Heart right ventricle (tissue), 16 donors: ENCODE measurements at regions of chrX and their contacts with region 1.

Region 1: DNA sequence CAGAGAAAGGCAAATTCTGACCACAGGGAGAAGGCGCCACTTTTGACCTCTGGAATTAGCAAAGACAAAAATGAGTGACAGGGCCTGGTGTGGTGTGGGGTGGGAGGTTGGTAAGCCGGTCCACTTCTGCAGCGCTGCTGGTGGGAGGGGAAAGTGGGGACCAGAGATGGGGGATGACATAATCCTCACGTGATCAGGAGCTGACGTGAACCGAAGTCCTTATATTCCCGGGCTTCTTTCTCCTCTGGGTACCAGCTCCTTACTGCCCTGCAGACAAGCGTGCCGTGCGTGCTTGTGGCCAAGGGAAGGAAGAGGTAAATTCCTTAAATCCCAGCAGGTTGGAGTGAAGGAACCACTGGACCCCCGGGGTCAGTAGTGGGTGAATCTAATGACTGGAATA is at the start of gene TCEAL7:
- DNase-seq: peak; percentile 6 to 32
- ATAC-seq: peak in 7 of 8 donors; percentile 64 to 90 (median 88)
- H3K4me3 ChIP-seq: peak within 1 kb of the TSS in 9 of 10 donors; percentile 12 to 54 (median 45)
- H3K27ac ChIP-seq: peak within 1 kb of the TSS in 5 of 10 donors; percentile 8 to 60 (median 21)
- H3K4me1 ChIP-seq: peaks cover 0 to 3% (median 0%) of the 10 kb centered on the region in 9 donors
- H3K27me3 ChIP-seq: peaks cover 0 to 75% (median 0%) of the 10 kb centered on the region in 7 donors
- CTCF ChIP-seq: no peak
- total RNA-seq, gene TCEAL7: 2.0 to 5.3 (median 3.6) TPM

Region 2: GRCh38 chrX:103254921-103255493 is 75.0 kb before region 1 on chrX and contains the start of gene TCEAL8:
- intact Hi-C with region 1: loop called in 2 of 10 experiments (anchors 10 kb)
- DNase-seq: peak; percentile 72 to 84
- ATAC-seq: peak; percentile 94 to 99 (median 97)
- H3K4me3 ChIP-seq: peak within 1 kb of the TSS; percentile 41 to 84 (median 68)
- H3K27ac ChIP-seq: peak within 1 kb of the TSS; percentile 70 to 92 (median 86)
- H3K4me1 ChIP-seq: peaks cover 0 to 21% (median 11%) of the 10 kb centered on the region in 9 donors
- H3K27me3 ChIP-seq: peaks cover 0 to 36% (median 0%) of the 10 kb centered on the region in 7 donors
- CTCF ChIP-seq: no peak
- total RNA-seq, gene TCEAL8: 39.2 to 56.6 (median 51.9) TPM

Region 3: DNA sequence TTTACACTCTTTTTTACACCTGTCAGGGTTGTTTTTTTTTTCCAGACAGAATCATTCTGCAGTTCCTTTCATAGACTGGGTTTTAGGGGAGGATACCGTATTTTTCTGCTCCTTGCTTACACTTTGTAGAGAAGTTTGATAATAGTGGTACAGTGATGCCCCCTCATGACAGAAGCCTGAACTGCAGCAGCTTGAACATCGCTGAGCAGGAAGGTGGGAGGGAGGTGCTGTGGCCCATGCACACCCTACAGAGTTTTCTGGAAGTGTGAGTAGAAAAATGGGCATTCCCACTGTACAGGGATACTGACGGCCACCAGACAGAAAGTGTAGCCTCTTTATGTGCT is 134.8 kb after region 1 on chrX:
- intact Hi-C with region 1: loop called in 1 of 10 experiments (anchors 10 kb)
- DNase-seq: peak; percentile 39 to 73
- ATAC-seq: peak; percentile 73 to 96 (median 90)
- H3K4me3 ChIP-seq: peak overlapping the region in 9 of 10 donors; percentile 11 to 47 (median 38)
- H3K27ac ChIP-seq: no peak overlapping the region
- H3K4me1 ChIP-seq: no peaks in the 10 kb centered on the region
- H3K27me3 ChIP-seq: peaks cover 0 to 26% (median 0%) of the 10 kb centered on the region in 7 donors
- CTCF ChIP-seq: peak; percentile 45 to 78 (median 72)

Region 4: DNA sequence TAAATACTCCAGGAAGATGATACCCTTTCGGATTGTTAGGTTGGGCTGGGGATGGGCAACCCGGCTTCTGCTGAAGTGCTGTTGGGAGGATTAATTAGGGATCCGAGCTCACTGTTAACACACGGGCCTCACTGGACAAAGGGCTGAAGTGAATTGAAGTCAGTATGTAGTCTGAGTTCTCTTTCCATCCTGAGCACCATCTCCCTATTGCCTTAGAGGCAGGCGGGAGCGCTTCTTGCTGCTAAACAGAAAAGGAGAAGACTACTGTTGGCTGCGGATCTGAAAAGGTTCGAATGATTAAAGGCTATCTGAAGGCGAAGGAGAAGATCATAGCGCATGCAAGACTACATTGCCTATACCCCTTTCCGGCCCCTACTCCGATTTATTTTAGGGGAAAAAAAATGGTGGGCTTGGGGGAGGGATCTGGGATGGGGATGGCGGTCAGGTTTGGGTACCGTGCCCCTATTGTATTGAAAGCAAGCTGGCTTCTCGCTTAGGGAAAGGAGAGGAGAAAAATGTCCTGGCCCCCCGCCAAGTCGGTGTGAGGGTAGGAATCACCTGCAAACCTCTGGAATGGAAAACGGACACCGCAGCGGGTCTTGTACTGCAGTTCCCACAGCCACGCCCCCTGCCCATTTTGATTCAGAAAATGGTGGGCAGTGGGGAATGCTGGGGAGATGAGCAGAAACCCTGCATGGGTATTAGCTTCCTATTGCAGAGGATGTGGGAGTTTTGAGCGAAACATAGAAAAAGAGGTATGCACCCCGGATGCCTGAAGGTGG is 334.2 kb after region 1 on chrX:
- intact Hi-C with region 1: loop called in 1 of 10 experiments (anchors 10 kb)
- DNase-seq: no peak
- ATAC-seq: no peak
- H3K4me3 ChIP-seq: no peak overlapping the region
- H3K27ac ChIP-seq: no peak overlapping the region
- H3K4me1 ChIP-seq: no peaks in the 10 kb centered on the region
- H3K27me3 ChIP-seq: peaks cover 0 to 68% (median 0%) of the 10 kb centered on the region in 7 donors
- CTCF ChIP-seq: no peak